Cardiac septum (tissue), 1 donor: ENCODE measurements at regions of chr14 and their contacts with region 1.

Region 1: DNA sequence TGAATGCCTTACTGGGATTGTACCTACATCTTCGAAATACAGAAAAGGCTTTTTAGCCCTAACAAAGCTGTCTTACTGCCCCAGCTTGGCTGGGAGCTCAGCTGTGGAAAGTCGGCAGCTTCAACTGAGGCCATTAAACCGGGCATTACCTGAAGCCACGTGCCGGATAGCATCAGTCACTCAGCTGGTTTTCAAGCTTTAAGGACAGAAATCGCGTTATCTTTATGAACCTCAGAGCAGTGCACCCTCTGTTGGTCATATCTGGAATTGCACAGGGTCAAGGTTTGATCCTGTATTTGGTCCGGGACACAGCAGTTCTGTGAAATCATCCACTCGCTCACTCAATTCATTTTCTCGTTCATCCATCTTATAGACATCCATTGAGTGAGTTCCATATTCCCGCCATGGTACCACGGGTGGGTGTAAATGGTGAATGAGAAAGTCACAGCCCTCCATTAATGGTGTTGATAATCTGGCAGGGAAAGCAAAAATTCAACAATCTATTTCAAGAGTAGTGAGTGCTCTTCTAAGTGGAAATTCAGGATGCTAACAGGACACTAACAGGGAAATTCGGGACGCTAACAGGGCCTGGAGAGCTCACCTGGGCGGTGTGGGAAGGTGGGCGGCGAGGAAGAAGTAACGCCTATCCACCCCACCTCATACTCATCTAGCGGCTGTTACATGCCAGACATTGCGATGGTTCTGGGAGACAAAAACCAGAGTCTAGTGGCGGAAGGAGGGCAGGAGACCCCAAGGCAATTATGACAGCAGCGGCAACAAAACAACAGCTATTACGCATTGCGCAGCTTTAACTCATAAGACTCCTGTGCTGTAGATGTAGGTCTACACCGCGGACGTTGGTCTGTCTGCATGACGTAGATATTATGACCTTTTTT is 60.6 kb upstream of the TCL1A start:
- DNase-seq: no peak

Region 2: DNA sequence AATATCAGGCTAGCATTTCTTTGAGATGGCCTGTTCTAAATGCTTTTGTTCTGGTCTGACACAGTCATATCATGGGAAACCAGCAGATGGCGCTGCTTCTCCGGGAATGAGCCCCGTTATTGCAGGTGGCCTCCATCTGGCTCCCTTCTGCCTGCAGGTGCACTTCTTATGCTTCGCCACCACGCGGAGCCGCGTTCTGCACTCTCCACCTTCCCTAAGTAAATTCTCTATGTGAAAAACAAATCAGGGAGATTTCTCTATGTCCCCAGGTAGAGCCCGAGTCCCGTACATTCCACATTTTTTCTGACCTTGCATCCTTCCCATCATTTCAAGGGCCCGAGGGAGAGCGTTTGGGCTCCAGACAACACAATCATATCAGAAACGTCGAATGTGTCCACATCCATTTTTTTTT is 213.5 kb before region 1 on chr14:
- intact Hi-C with region 1: loop called (anchors 5 kb)
- DNase-seq: peak; percentile 84

Region 3: GRCh38 chr14:95979339-95980042 is 205.0 kb after region 1 on chr14:
- intact Hi-C with region 1: loop called (anchors 10 kb)
- DNase-seq: no peak